Activated CD4-positive, alpha-beta T cell treated with anti-CD3 and anti-CD28 coated beads, Interleukin-2, amount 10 ng/mL, durations not matched to agents 24 days and 14 days (primary cell): ENCODE measurements at regions of chr6 and their contacts with region 1.

Region 1: DNA sequence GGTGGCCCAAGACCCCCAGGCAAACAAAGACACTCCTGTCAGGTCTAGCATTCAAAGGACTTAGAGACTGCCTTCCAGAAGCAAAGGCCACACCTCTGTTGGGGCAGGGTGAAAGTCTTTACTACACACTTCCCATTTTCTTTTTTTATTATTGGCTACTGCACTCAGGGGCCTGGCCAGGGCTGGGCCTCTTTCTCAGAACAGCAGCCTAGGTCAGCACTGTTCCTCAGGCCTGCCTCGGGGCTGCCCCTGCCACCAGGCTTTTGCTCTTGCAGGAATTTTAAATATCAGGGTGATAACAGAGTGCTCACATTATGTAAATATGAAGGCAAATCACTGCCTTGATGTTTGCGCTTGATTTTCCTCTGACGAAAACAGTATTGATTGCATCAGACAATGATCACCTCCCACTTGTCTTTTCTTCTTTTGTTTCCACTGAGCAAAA is 18.5 kb downstream of the GSTA4 start:
- DNase-seq: no peak
- H3K4me3 Mint-ChIP-seq: peak overlapping the region; percentile 60
- H3K27ac Mint-ChIP-seq: peak overlapping the region; percentile 91
- H3K4me1 Mint-ChIP-seq: peaks cover 36% of the 10 kb centered on the region
- H3K27me3 Mint-ChIP-seq: no peaks in the 10 kb centered on the region

Region 2: DNA sequence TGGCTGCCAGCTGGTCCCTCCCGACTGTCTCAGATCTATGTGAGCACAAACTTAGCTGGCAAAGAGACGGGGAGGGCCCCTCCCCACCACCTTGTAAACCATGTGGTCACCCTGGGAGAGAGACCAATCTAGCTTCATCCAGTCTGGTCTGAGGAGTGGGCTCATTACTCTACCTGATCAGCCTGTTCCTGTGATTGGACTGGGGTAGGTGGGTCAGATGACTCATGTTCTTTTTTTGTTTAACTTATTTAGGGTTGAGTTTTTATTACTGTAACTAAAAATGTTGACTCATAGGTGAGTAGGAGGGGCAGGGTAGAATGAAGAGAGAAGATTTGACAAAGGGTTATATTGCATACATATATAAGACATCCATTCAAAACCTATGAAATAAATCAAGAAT is 13.7 kb after region 1 on chr6:
- intact Hi-C with region 1: loop called (anchors 1 kb)
- DNase-seq: no peak
- H3K4me3 Mint-ChIP-seq: peak overlapping the region; percentile 16
- H3K27ac Mint-ChIP-seq: peak overlapping the region; percentile 90
- H3K4me1 Mint-ChIP-seq: peaks cover 52% of the 10 kb centered on the region
- H3K27me3 Mint-ChIP-seq: peaks cover 3% of the 10 kb centered on the region